ENCODE measurements at regions of chr15 and their contacts with region 1.

Region 1: DNA sequence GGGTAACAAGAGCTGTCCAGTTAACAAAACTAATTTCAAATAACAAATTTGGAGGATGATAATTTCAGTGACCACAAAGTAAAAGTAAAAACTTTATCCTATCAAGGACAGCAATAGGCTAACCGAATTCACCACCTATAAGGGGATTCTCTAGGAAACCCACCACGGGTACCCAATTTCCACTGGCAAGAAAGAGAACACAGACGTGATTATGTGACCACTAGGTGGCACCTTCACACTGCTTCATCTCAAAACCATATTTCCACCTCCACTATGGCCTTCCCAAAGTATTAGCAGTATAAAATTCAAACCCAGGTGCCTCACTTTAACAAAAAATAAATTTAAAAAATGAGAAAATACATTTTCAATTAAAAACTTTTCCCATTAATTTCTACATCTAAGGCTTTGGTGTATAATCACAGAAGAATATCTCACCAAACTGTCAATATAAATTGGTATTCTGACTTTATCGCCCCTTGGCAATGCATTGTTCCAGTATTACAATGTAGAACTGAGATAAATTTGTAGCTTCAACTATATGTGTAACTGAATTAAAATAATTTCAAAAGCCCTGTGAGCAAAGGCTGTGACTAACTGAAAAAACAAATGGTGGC is 96.5 kb downstream of the FSIP1 start:
- DNase-seq: peak in 6 of 9 experiments; percentile 4 to 71 (median 29)
- ATAC-seq: peak; percentile 49
- H3K4me3 ChIP-seq: no peak overlapping the region
- H3K4me3 Mint-ChIP-seq: no peak overlapping the region
- H3K27ac ChIP-seq: no peak overlapping the region
- H3K27ac Mint-ChIP-seq: no peak overlapping the region
- H3K4me1 ChIP-seq: no peaks in the 10 kb centered on the region
- H3K4me1 Mint-ChIP-seq: no peaks in the 10 kb centered on the region
- H3K27me3 ChIP-seq: no peaks in the 10 kb centered on the region
- H3K27me3 Mint-ChIP-seq: no peaks in the 10 kb centered on the region
- CTCF ChIP-seq: peak; percentile 93

Region 2: GRCh38 chr15:37709669-37710068 is 1976.4 kb before region 1 on chr15:
- CTCF ChIA-PET with region 1: no interaction called
- POLR2A ChIA-PET with region 1: no interaction called
- intact Hi-C with region 1: no loop called
- DNase-seq: no peak
- ATAC-seq: no peak
- H3K4me3 ChIP-seq: no peak overlapping the region
- H3K4me3 Mint-ChIP-seq: no peak overlapping the region
- H3K27ac ChIP-seq: no peak overlapping the region
- H3K27ac Mint-ChIP-seq: no peak overlapping the region
- H3K4me1 ChIP-seq: no peaks in the 10 kb centered on the region
- H3K4me1 Mint-ChIP-seq: no peaks in the 10 kb centered on the region
- H3K27me3 ChIP-seq: no peaks in the 10 kb centered on the region
- H3K27me3 Mint-ChIP-seq: no peaks in the 10 kb centered on the region
- CTCF ChIP-seq: no peak

Region 3: GRCh38 chr15:37907136-37907535 is 1779.0 kb before region 1 on chr15:
- CTCF ChIA-PET with region 1: no interaction called
- POLR2A ChIA-PET with region 1: no interaction called
- intact Hi-C with region 1: no loop called
- DNase-seq: no peak
- ATAC-seq: no peak
- H3K4me3 ChIP-seq: no peak overlapping the region
- H3K4me3 Mint-ChIP-seq: no peak overlapping the region
- H3K27ac ChIP-seq: no peak overlapping the region
- H3K27ac Mint-ChIP-seq: no peak overlapping the region
- H3K4me1 ChIP-seq: no peaks in the 10 kb centered on the region
- H3K4me1 Mint-ChIP-seq: no peaks in the 10 kb centered on the region
- H3K27me3 ChIP-seq: no peaks in the 10 kb centered on the region
- H3K27me3 Mint-ChIP-seq: peaks cover 2% of the 10 kb centered on the region
- CTCF ChIP-seq: no peak

Region 4: GRCh38 chr15:39358441-39359041 is 327.6 kb before region 1 on chr15:
- CTCF ChIA-PET with region 1: no interaction called
- POLR2A ChIA-PET with region 1: no interaction called
- intact Hi-C with region 1: no loop called
- DNase-seq: no peak
- ATAC-seq: no peak
- H3K4me3 ChIP-seq: no peak overlapping the region
- H3K4me3 Mint-ChIP-seq: no peak overlapping the region
- H3K27ac ChIP-seq: no peak overlapping the region
- H3K27ac Mint-ChIP-seq: no peak overlapping the region
- H3K4me1 ChIP-seq: no peaks in the 10 kb centered on the region
- H3K4me1 Mint-ChIP-seq: no peaks in the 10 kb centered on the region
- H3K27me3 ChIP-seq: peaks cover 0 to 2% of the 10 kb centered on the region in 2 experiments
- H3K27me3 Mint-ChIP-seq: peaks cover 10% of the 10 kb centered on the region
- CTCF ChIP-seq: no peak

Region 5: GRCh38 chr15:39594056-39594763 is 91.9 kb before region 1 on chr15:
- CTCF ChIA-PET with region 1: interaction called, 7 read pairs
- POLR2A ChIA-PET with region 1: no interaction called
- intact Hi-C with region 1: loop called (anchors 1 to 5 kb)
- DNase-seq: peak in 4 of 9 experiments; percentile 19 to 72 (median 52)
- ATAC-seq: peak; percentile 58
- H3K4me3 ChIP-seq: no peak overlapping the region
- H3K4me3 Mint-ChIP-seq: peak overlapping the region; percentile 20
- H3K27ac ChIP-seq: no peak overlapping the region
- H3K27ac Mint-ChIP-seq: peak overlapping the region; percentile 74
- H3K4me1 ChIP-seq: no peaks in the 10 kb centered on the region
- H3K4me1 Mint-ChIP-seq: peaks cover 4% of the 10 kb centered on the region
- H3K27me3 ChIP-seq: no peaks in the 10 kb centered on the region
- H3K27me3 Mint-ChIP-seq: no peaks in the 10 kb centered on the region
- CTCF ChIP-seq: no peak

Region 6: GRCh38 chr15:39624806-39625205 is 61.3 kb before region 1 on chr15:
- CTCF ChIA-PET with region 1: interaction called, 18 read pairs
- POLR2A ChIA-PET with region 1: no interaction called
- intact Hi-C with region 1: no loop called
- DNase-seq: peak; percentile 46 to 92 (median 76)
- ATAC-seq: peak; percentile 55
- H3K4me3 ChIP-seq: no peak overlapping the region
- H3K4me3 Mint-ChIP-seq: peak overlapping the region; percentile 70
- H3K27ac ChIP-seq: peak overlapping the region; percentile 54 to 88
- H3K27ac Mint-ChIP-seq: peak overlapping the region; percentile 99
- H3K4me1 ChIP-seq: peaks cover 71% of the 10 kb centered on the region
- H3K4me1 Mint-ChIP-seq: peaks cover 77% of the 10 kb centered on the region
- H3K27me3 ChIP-seq: no peaks in the 10 kb centered on the region
- H3K27me3 Mint-ChIP-seq: no peaks in the 10 kb centered on the region
- CTCF ChIP-seq: no peak

Region 7: GRCh38 chr15:39667382-39668127 is 18.6 kb before region 1 on chr15:
- CTCF ChIA-PET with region 1: interaction called, 11 read pairs
- POLR2A ChIA-PET with region 1: no interaction called
- intact Hi-C with region 1: no loop called
- DNase-seq: no peak
- ATAC-seq: no peak
- H3K4me3 ChIP-seq: no peak overlapping the region
- H3K4me3 Mint-ChIP-seq: no peak overlapping the region
- H3K27ac ChIP-seq: no peak overlapping the region
- H3K27ac Mint-ChIP-seq: no peak overlapping the region
- H3K4me1 ChIP-seq: no peaks in the 10 kb centered on the region
- H3K4me1 Mint-ChIP-seq: peaks cover 10% of the 10 kb centered on the region
- H3K27me3 ChIP-seq: no peaks in the 10 kb centered on the region
- H3K27me3 Mint-ChIP-seq: no peaks in the 10 kb centered on the region
- CTCF ChIP-seq: no peak

Region 8: GRCh38 chr15:39699516-39700374 is 13.6 kb after region 1 on chr15:
- CTCF ChIA-PET with region 1: interaction called, 12 read pairs
- POLR2A ChIA-PET with region 1: no interaction called
- intact Hi-C with region 1: no loop called
- DNase-seq: no peak
- ATAC-seq: no peak
- H3K4me3 ChIP-seq: no peak overlapping the region
- H3K4me3 Mint-ChIP-seq: no peak overlapping the region
- H3K27ac ChIP-seq: no peak overlapping the region
- H3K27ac Mint-ChIP-seq: no peak overlapping the region
- H3K4me1 ChIP-seq: no peaks in the 10 kb centered on the region
- H3K4me1 Mint-ChIP-seq: no peaks in the 10 kb centered on the region
- H3K27me3 ChIP-seq: no peaks in the 10 kb centered on the region
- H3K27me3 Mint-ChIP-seq: no peaks in the 10 kb centered on the region
- CTCF ChIP-seq: no peak

Region 9: GRCh38 chr15:39782441-39783138 is 96.5 kb after region 1 on chr15 and contains the start of gene FSIP1:
- CTCF ChIA-PET with region 1: no interaction called
- POLR2A ChIA-PET with region 1: no interaction called
- intact Hi-C with region 1: no loop called
- DNase-seq: peak; percentile 91 to 97 (median 94)
- ATAC-seq: peak; percentile 98
- H3K4me3 ChIP-seq: peak within 1 kb of the TSS; percentile 71 to 95
- H3K4me3 Mint-ChIP-seq: peak within 1 kb of the TSS; percentile 85
- H3K27ac ChIP-seq: peak within 1 kb of the TSS; percentile 68 to 82
- H3K27ac Mint-ChIP-seq: peak within 1 kb of the TSS; percentile 87
- H3K4me1 ChIP-seq: peaks cover 20% of the 10 kb centered on the region
- H3K4me1 Mint-ChIP-seq: peaks cover 50% of the 10 kb centered on the region
- H3K27me3 ChIP-seq: no peaks in the 10 kb centered on the region
- H3K27me3 Mint-ChIP-seq: no peaks in the 10 kb centered on the region
- CTCF ChIP-seq: no peak
- total RNA-seq, gene FSIP1: 0.22 to 0.64 TPM